Heart right ventricle (tissue), 16 donors: ENCODE measurements at regions of chr20 and their contacts with region 1.

Region 1: DNA sequence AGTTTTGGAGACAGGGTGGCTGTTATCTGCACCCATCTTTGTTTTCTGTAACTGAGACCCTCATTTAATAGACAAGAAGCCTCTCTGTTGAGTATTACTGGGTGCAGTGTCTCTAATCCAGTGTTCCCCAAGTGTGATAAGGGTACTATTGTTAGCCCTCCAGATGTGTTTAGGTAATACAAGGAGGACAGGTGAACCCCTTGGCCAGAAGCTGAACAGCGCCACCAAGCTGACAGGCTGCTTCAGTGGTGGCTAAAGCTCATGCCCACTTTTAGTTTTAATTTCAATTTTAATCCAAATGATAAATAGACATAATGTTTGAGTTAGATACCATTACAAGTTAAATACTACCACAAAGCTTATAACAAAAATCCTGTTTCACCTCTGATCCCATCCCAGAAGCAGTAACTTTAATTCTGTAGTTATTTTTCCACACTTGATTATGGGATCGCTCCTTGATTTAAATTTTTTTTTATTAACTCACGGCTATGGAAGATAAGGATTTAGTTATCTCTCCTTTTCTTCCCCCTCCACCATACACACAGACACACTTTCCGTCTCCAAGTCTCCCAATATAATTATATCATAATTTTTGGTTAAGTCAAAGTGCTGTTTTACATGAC is 8.4 kb upstream of the STK35 start:
- DNase-seq: no peak
- ATAC-seq: no peak
- H3K4me3 ChIP-seq: no peak overlapping the region
- H3K27ac ChIP-seq: no peak overlapping the region
- H3K4me1 ChIP-seq: no peaks in the 10 kb centered on the region
- H3K27me3 ChIP-seq: peaks cover 0 to 58% (median 45%) of the 10 kb centered on the region in 7 donors
- CTCF ChIP-seq: peak in 7 of 9 donors; percentile 21 to 53 (median 39)

Region 2: GRCh38 chr20:1764136-1765033 is 328.9 kb before region 1 on chr20:
- intact Hi-C with region 1: loop called in 1 of 10 experiments (anchors 10 kb)
- DNase-seq: peak; percentile 67 to 75
- ATAC-seq: peak; percentile 75 to 94 (median 90)
- H3K4me3 ChIP-seq: no peak overlapping the region
- H3K27ac ChIP-seq: no peak overlapping the region
- H3K4me1 ChIP-seq: peaks cover 0 to 10% (median 3%) of the 10 kb centered on the region in 9 donors
- H3K27me3 ChIP-seq: peaks cover 0 to 5% (median 0%) of the 10 kb centered on the region in 7 donors
- CTCF ChIP-seq: peak; percentile 34 to 86 (median 74)

Region 3: GRCh38 chr20:1965520-1966351 is 127.5 kb before region 1 on chr20:
- intact Hi-C with region 1: loop called in 4 of 10 experiments (anchors 5 to 10 kb)
- DNase-seq: peak; percentile 71 to 75
- ATAC-seq: peak; percentile 72 to 90 (median 80)
- H3K4me3 ChIP-seq: peak overlapping the region in 4 of 10 donors; percentile 5 to 22 (median 13)
- H3K27ac ChIP-seq: peak overlapping the region in 2 of 10 donors; percentile 16 to 69
- H3K4me1 ChIP-seq: peaks cover 0 to 26% (median 10%) of the 10 kb centered on the region in 9 donors
- H3K27me3 ChIP-seq: peaks cover 0 to 28% (median 6%) of the 10 kb centered on the region in 7 donors
- CTCF ChIP-seq: peak; percentile 81 to 97 (median 94)

Region 4: DNA sequence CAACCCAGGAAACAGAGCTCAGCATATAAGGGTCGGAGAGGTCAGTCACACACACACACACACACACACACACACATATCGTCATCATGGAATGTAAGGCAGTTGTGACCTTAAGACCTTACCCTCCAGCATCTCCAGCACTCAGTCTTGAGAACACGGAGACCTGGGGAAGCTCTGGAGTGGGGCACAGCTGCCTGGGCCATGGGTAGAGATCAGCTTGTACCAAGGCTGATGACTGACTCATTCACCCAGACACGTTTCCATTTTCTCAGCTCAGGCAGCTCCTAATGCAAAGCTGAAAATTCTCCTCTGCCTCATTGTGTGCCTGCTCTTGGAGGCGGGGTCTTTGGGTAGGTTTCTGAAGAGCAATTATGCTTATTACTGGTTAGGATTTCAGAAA is 61.1 kb before region 1 on chr20:
- intact Hi-C with region 1: loop called in 1 of 10 experiments (anchors 10 kb)
- DNase-seq: no peak
- ATAC-seq: no peak
- H3K4me3 ChIP-seq: no peak overlapping the region
- H3K27ac ChIP-seq: no peak overlapping the region
- H3K4me1 ChIP-seq: no peaks in the 10 kb centered on the region
- H3K27me3 ChIP-seq: peaks cover 0 to 46% (median 31%) of the 10 kb centered on the region in 7 donors
- CTCF ChIP-seq: no peak

Region 5: DNA sequence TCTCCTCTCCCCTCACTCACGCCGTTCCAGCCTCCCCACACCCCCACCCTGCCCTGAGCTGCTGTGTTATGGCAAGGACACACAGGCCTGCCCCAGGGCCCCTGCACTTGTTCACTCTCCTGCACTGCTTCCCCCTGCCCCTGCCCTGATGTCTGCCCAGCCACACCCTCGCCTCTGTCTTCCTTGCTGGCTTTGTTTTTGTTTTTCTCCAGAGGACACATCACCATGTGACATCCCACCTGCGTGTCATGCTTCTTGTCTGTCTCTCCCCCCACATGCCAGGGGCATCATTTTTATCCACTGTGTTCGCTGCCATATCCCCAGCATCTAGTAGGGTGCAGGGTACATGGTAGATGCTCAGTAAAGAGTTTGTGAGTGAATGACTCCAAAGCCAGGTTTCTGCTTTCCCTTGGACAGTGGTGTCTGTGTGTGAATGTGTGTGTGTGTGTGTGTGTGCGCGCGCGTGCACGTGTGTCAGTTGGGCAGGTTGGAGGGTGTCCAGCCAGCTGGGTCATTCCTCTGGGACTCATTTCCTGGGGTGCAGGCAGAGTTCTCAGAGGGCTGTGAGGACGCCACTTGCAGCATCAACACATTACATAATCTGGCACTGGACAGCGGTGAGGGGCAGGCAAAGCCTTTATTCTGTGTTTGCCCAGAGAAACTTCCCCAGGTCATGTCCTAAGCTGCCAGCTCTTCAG is 69.0 kb after region 1 on chr20:
- intact Hi-C with region 1: loop called in 2 of 10 experiments (anchors 5 to 10 kb)
- DNase-seq: no peak
- ATAC-seq: no peak
- H3K4me3 ChIP-seq: no peak overlapping the region
- H3K27ac ChIP-seq: no peak overlapping the region
- H3K4me1 ChIP-seq: no peaks in the 10 kb centered on the region
- H3K27me3 ChIP-seq: no peaks in the 10 kb centered on the region
- CTCF ChIP-seq: no peak